IMR-90 (cell line): ENCODE measurements at regions of chr2 and their contacts with region 1.

Region 1: GRCh38 chr2:119264781-119265692 is 41.4 kb downstream of the STEAP3 start:
- DNase-seq: peak; percentile 48
- ATAC-seq: peak; percentile 96
- H3K4me3 ChIP-seq: no peak overlapping the region
- H3K27ac ChIP-seq: no peak overlapping the region
- H3K4me1 ChIP-seq: peaks cover 8% of the 10 kb centered on the region; the same call in 1 of the 2 replicates
- H3K27me3 ChIP-seq: no peaks in the 10 kb centered on the region
- CTCF ChIP-seq: peak; percentile 77
- POLR2A ChIP-seq: no peak
- RAD21 ChIP-seq: peak; percentile 89

Region 2: DNA sequence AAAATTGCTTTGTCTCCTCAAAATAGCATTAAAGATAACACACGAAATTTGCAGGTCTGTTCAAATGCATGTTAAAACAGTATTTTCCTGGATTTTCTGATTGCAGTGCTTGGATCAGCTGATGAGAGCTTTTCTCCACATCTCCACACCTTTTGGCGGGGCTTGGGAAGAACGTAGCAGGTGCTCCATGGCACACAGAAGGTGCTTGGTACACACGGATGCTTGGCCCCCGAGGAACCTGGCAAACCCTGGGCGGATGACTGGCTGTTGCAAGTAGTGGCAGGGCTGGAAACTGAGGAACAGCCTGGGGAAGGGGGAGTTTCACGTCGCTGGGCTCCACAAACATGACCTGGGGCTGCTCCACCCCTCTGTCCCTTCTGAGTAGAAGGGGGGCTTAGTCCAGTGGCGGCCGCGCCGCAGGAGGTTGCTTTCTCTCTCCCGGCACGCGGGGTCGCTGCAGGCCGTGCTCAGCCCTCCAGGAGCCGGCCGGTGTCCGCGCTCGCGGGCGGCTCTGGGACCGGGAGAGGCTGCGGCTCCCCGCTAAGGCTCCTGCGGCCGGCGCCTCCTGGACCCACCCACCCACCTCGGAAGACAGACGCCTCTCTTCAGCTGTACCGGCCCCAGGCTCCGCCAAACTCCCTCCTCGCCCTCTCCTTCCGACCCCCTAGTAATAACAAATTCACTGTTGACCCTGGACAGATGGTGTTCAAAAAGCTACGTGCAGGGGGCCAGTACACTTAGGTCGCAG is 253.7 kb before region 1 on chr2:
- CTCF ChIA-PET with region 1: no interaction called
- POLR2A ChIA-PET with region 1: no interaction called
- dilution Hi-C with region 1: no loop called
- in situ Hi-C with region 1: no loop called
- intact Hi-C with region 1: loop called (anchors 1 kb)
- DNase-seq: peak; percentile 5
- ATAC-seq: peak; percentile 99
- H3K4me3 ChIP-seq: no peak overlapping the region
- H3K27ac ChIP-seq: no peak overlapping the region
- H3K4me1 ChIP-seq: no peaks in the 10 kb centered on the region
- H3K27me3 ChIP-seq: peaks cover 5% of the 10 kb centered on the region
- CTCF ChIP-seq: peak; percentile 67
- POLR2A ChIP-seq: no peak
- RAD21 ChIP-seq: peak; percentile 82

Region 3: DNA sequence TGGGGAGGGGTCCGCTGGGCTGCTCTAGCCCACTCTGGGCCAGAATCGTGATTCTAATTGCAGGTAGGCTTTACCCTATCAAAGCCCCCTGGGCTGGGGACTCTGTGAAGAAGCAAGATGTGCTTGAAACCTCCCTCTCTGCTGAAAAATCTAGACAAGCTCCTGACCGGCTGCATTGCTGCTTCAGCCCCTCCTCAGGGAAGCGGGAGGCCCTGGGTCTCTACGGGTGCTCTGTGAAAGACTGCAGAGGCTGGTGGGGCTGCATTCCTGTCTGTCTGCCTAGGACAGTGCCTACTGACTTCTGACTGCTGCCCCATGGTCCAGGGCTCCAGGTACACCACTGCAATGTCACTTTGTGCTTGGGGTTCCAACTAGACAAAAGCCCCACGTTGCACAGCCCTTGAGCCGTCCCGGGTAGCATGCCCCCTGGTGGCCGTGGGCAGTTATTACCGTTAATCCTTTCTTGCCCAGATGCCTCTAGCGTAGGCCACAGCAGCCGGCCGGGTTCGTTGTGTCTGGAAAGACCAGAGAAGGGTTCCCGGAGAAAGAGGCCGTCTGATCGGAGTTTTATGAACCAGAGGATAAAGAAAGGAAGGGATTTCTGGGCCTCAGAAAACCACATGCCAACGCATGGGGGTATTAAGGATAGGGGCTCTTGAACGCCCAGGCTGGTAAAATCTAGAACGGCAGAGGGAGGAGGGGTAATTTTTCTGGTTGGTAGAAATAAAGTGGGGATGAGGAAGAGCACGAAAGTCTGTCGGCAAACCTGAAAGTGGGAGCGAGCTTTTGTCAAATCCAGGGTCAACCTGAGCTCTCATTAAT is 90.6 kb before region 1 on chr2:
- CTCF ChIA-PET with region 1: no interaction called
- POLR2A ChIA-PET with region 1: no interaction called
- dilution Hi-C with region 1: no loop called
- in situ Hi-C with region 1: loop called (anchors 25 kb)
- intact Hi-C with region 1: no loop called
- DNase-seq: no peak
- ATAC-seq: peak; percentile 65; the same call in 1 of the 2 replicates
- H3K4me3 ChIP-seq: no peak overlapping the region
- H3K27ac ChIP-seq: no peak overlapping the region
- H3K4me1 ChIP-seq: no peaks in the 10 kb centered on the region
- H3K27me3 ChIP-seq: peaks cover 11% of the 10 kb centered on the region; the same call in 1 of the 2 replicates
- CTCF ChIP-seq: peak; percentile 52
- POLR2A ChIP-seq: no peak
- RAD21 ChIP-seq: peak; percentile 20; the same call in 1 of the 2 replicates

Region 4: GRCh38 chr2:119218478-119219064 is 46.5 kb before region 1 on chr2:
- CTCF ChIA-PET with region 1: interaction called, 5 read pairs
- POLR2A ChIA-PET with region 1: no interaction called
- dilution Hi-C with region 1: no loop called
- in situ Hi-C with region 1: no loop called
- intact Hi-C with region 1: loop called (anchors 1 kb)
- DNase-seq: peak; percentile 74
- ATAC-seq: no peak
- H3K4me3 ChIP-seq: no peak overlapping the region
- H3K27ac ChIP-seq: no peak overlapping the region
- H3K4me1 ChIP-seq: peaks cover 3% of the 10 kb centered on the region; the same call in 1 of the 2 replicates
- H3K27me3 ChIP-seq: peaks cover 3% of the 10 kb centered on the region
- CTCF ChIP-seq: peak; percentile 75
- POLR2A ChIP-seq: no peak
- RAD21 ChIP-seq: peak; percentile 92